Activated CD4-positive, alpha-beta memory T cell treated with anti-CD3 and anti-CD28 coated beads for 36 hours (primary cell): ENCODE measurements at regions of chr5 and their contacts with region 1.

Region 1: DNA sequence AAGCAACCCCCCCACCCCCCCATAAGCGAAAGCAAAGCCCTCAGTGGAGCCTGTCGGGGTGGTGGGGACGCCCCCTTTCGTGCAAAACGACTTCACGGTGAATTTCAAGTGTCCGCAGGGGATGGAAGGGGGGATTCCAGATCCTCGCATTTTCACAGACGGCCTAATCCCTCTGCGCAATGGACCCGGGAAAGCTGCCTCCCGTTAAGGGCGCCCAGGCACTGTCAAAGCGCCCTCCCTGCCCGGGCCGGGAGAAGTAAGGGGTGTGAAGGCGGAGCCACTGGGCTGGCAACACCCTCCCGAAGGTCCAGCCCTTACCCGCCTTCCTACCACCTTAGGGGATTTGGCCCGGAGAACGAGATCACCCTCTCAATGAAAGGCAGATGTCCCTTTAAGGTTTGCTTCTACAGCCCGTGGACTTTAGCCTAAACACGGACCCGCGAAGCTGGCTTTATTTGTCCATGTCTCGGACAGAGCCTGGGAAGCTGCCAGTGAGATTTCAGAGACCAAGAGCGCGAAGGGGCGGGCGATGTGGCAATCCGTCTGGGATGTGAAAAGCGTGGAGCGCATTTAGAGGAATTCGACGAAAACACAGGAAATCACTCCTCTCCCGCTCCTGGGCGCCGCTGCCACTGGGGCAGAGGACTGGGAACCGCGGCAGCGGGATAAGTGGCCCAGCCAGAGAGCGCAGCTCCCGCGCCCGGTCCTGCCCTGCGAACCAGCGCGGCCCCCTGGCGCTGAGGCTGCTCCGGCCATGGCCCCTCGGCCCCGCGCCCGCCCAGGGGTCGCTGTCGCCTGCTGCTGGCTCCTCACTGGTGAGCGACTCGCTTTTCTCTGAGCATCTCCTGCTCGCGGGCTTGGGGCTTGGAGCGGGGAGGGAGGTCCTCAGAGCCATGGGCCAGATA is at the starts of genes ITGA1 and PELO:
- DNase-seq: peak; percentile 61
- H3K4me3 Mint-ChIP-seq: peak within 1 kb of the TSS; percentile 82
- H3K27ac Mint-ChIP-seq: peak within 1 kb of the TSS; percentile 43
- H3K4me1 Mint-ChIP-seq: peaks cover 18% of the 10 kb centered on the region
- H3K27me3 Mint-ChIP-seq: peaks cover 8% of the 10 kb centered on the region
- total RNA-seq, gene ITGA1: 0.62 to 1.3 TPM
- total RNA-seq, gene PELO: 15.1 to 16.2 TPM

Region 2: GRCh38 chr5:51172903-51173626 is 1614.8 kb before region 1 on chr5:
- CTCF ChIA-PET with region 1: no interaction called
- POLR2A ChIA-PET with region 1: no interaction called
- intact Hi-C with region 1: no loop called
- DNase-seq: no peak
- H3K4me3 Mint-ChIP-seq: no peak overlapping the region
- H3K27ac Mint-ChIP-seq: no peak overlapping the region
- H3K4me1 Mint-ChIP-seq: no peaks in the 10 kb centered on the region
- H3K27me3 Mint-ChIP-seq: no peaks in the 10 kb centered on the region

Region 3: DNA sequence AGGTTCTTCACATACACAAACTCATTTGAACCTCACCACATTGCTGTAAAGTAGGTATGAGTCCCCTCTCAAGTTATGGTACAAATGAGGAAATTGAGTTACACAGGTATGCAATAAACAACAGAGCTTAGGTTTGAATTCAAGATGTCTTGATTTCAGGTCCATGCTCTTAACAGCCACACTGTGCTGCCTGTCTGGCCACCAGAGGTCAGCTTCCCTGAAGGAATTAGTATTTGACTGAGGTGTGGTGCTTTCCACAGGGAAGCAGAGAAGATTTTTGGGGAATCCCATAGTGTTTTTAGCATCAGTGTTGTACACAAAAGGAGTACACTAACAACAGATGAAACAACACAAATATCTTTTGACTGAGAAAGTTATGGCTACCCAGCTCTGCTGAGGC is 94.6 kb before region 1 on chr5:
- CTCF ChIA-PET with region 1: interaction called, 4 read pairs
- POLR2A ChIA-PET with region 1: no interaction called
- intact Hi-C with region 1: loop called (anchors 5 kb)
- DNase-seq: peak; percentile 35
- H3K4me3 Mint-ChIP-seq: no peak overlapping the region
- H3K27ac Mint-ChIP-seq: no peak overlapping the region
- H3K4me1 Mint-ChIP-seq: no peaks in the 10 kb centered on the region
- H3K27me3 Mint-ChIP-seq: no peaks in the 10 kb centered on the region

Region 4: DNA sequence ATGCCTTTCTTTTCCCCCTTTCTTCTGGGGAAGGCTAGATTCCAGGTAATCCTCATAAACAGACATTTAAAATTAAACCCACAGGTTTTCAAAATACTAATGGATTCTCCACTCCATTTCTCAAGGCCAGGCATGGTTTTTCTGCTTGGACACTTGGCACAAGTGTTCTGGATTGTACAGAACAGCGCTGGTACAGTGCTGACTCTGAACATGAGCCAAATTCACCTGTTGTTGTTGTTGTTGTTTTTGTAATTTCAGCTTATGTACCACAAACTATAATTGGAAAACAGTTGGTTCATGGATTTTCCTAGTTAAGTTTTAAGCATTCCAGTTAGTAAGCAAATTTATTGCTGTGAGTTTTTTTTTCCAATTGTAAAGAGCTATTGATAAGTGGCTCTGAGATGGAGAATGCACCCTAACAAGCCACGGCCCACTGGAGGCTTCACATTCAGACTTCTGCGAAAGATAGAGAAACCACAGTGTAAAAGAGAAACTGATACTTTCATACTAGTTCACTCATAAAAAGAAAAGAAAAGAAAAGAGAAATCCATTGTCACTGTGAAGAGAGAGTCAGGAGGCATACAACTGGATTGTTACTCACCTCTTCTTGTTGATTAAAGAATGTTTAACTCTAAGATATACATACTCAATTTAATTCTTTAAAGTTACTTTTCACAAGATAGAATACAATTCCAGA is 16.4 kb before region 1 on chr5:
- CTCF ChIA-PET with region 1: interaction called, 7 read pairs
- POLR2A ChIA-PET with region 1: no interaction called
- intact Hi-C with region 1: loop called (anchors 2 kb)
- DNase-seq: peak; percentile 63
- H3K4me3 Mint-ChIP-seq: no peak overlapping the region
- H3K27ac Mint-ChIP-seq: no peak overlapping the region
- H3K4me1 Mint-ChIP-seq: peaks cover 43% of the 10 kb centered on the region
- H3K27me3 Mint-ChIP-seq: no peaks in the 10 kb centered on the region

Region 5: DNA sequence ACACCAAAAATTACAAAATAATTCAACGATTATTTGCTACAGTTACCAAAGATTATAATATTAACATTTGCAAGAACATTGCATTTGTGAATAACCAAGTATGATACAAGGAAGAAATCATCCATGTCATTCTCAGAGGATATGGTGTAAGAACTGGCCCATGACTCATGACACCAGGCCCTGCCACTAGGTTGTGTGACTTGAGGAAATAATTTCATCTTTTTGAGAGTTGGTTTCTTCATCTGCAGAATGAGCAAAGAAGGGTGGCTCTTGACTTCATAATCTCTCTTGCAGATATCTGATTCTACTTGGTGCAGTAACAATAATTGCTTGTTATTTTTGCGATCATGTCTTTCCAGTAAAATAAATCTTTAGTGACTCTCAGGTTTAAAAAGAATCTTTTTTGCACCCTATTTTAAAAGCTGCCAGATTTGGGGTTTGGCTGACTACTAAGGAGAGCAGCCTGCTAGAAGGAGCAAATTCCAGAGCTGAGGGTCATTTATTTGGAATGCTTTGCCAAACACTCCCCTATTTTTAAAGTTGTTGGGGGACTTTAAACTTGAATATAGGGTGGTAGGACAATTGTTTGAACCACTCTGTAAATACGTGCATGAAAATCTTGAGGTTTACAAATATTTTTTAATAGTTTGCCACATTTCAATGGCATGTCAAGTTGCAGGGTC is 23.4 kb after region 1 on chr5:
- CTCF ChIA-PET with region 1: no interaction called
- POLR2A ChIA-PET with region 1: no interaction called
- intact Hi-C with region 1: no loop called
- DNase-seq: no peak
- H3K4me3 Mint-ChIP-seq: no peak overlapping the region
- H3K27ac Mint-ChIP-seq: no peak overlapping the region
- H3K4me1 Mint-ChIP-seq: peaks cover 6% of the 10 kb centered on the region
- H3K27me3 Mint-ChIP-seq: no peaks in the 10 kb centered on the region

Region 6: GRCh38 chr5:52831786-52832511 is 44.1 kb after region 1 on chr5:
- CTCF ChIA-PET with region 1: no interaction called
- POLR2A ChIA-PET with region 1: no interaction called
- intact Hi-C with region 1: no loop called
- DNase-seq: no peak
- H3K4me3 Mint-ChIP-seq: no peak overlapping the region
- H3K27ac Mint-ChIP-seq: no peak overlapping the region
- H3K4me1 Mint-ChIP-seq: no peaks in the 10 kb centered on the region
- H3K27me3 Mint-ChIP-seq: no peaks in the 10 kb centered on the region

Region 7: GRCh38 chr5:52915176-52915875 is 127.5 kb after region 1 on chr5:
- CTCF ChIA-PET with region 1: interaction called, 6 read pairs
- POLR2A ChIA-PET with region 1: no interaction called
- intact Hi-C with region 1: loop called (anchors 1 kb)
- DNase-seq: peak; percentile 52
- H3K4me3 Mint-ChIP-seq: peak overlapping the region; percentile 36
- H3K27ac Mint-ChIP-seq: no peak overlapping the region
- H3K4me1 Mint-ChIP-seq: peaks cover 6% of the 10 kb centered on the region
- H3K27me3 Mint-ChIP-seq: no peaks in the 10 kb centered on the region

Region 8: DNA sequence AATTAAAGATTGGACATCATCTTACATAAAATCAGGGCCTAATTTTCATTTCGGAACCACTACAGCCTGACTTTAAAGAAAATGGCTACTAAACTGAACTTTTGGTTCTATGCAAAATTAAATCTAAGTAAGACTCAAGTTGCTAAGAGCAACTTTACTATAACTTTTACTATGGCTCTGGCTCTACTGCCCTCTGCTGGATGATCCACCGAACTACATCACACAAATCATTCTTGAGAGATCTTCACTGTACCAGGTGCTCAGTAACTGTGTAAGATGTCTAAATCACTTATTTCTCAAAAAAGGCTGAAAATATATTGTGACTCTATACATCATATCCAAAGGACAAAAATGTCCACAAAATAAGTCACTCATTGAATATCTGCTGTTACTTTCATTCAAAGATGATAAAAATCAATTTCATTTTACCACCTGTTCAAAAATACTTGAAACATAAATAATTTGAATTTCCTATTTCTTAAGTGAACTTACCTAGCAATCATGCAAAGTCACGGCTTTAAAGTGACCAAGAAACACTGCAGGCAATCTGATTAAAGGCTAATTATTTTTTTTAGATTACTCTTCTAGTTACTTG is 308.2 kb after region 1 on chr5:
- CTCF ChIA-PET with region 1: no interaction called
- POLR2A ChIA-PET with region 1: no interaction called
- intact Hi-C with region 1: loop called (anchors 5 kb)
- DNase-seq: peak; percentile 78
- H3K4me3 Mint-ChIP-seq: no peak overlapping the region
- H3K27ac Mint-ChIP-seq: no peak overlapping the region
- H3K4me1 Mint-ChIP-seq: no peaks in the 10 kb centered on the region
- H3K27me3 Mint-ChIP-seq: no peaks in the 10 kb centered on the region